Panc1 (cell line): ENCODE measurements at regions of chr5 and their contacts with region 1.

Region 1: DNA sequence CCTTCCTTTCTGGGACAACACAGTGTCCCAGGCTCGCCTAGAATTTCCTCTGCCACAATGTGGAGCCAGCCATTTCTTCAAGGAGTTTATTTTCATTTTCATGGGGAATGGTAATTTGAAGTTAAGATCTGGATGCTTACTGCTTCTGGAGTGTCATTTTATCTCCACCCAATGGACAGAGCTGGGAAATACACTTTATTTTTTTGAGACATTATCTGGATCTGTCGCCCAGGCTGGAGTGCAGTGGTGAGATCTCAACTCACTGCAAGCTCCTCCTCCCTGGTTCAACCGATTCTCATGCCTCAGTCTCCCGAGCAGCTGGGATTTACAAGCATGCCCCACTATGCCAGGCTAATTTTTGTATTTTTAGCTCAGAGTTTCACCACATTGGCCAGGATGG is 12.7 kb upstream of the THG1L start:
- DNase-seq: peak; percentile 48
- ATAC-seq: peak; percentile 91
- H3K4me3 ChIP-seq: no peak overlapping the region
- H3K27ac ChIP-seq: no peak overlapping the region
- H3K4me1 ChIP-seq: no peaks in the 10 kb centered on the region
- H3K27me3 ChIP-seq: no peaks in the 10 kb centered on the region
- CTCF ChIP-seq: peak; percentile 77

Region 2: GRCh38 chr5:157328277-157328912 is 390.1 kb before region 1 on chr5:
- CTCF ChIA-PET with region 1: interaction called, 6 read pairs
- POLR2A ChIA-PET with region 1: no interaction called
- in situ Hi-C with region 1: no loop called
- intact Hi-C with region 1: loop called (anchors 5 kb)
- DNase-seq: peak; percentile 62
- ATAC-seq: peak; percentile 98
- H3K4me3 ChIP-seq: peak overlapping the region; percentile 14 to 62; a peak in 3 of 4 replicates
- H3K27ac ChIP-seq: no peak overlapping the region
- H3K4me1 ChIP-seq: peaks cover 4% of the 10 kb centered on the region; the same call in 1 of the 2 replicates
- H3K27me3 ChIP-seq: no peaks in the 10 kb centered on the region; the same call in 1 of the 2 replicates
- CTCF ChIP-seq: peak; percentile 95

Region 3: GRCh38 chr5:157665467-157666100 is 52.9 kb before region 1 on chr5:
- CTCF ChIA-PET with region 1: interaction called, 5 read pairs
- POLR2A ChIA-PET with region 1: no interaction called
- in situ Hi-C with region 1: no loop called
- intact Hi-C with region 1: loop called (anchors 5 kb)
- DNase-seq: no peak
- ATAC-seq: no peak
- H3K4me3 ChIP-seq: no peak overlapping the region
- H3K27ac ChIP-seq: no peak overlapping the region
- H3K4me1 ChIP-seq: no peaks in the 10 kb centered on the region
- H3K27me3 ChIP-seq: peaks cover 6% of the 10 kb centered on the region
- CTCF ChIP-seq: no peak